ENCODE measurements at regions of chr16 and their contacts with region 1.

Region 1: DNA sequence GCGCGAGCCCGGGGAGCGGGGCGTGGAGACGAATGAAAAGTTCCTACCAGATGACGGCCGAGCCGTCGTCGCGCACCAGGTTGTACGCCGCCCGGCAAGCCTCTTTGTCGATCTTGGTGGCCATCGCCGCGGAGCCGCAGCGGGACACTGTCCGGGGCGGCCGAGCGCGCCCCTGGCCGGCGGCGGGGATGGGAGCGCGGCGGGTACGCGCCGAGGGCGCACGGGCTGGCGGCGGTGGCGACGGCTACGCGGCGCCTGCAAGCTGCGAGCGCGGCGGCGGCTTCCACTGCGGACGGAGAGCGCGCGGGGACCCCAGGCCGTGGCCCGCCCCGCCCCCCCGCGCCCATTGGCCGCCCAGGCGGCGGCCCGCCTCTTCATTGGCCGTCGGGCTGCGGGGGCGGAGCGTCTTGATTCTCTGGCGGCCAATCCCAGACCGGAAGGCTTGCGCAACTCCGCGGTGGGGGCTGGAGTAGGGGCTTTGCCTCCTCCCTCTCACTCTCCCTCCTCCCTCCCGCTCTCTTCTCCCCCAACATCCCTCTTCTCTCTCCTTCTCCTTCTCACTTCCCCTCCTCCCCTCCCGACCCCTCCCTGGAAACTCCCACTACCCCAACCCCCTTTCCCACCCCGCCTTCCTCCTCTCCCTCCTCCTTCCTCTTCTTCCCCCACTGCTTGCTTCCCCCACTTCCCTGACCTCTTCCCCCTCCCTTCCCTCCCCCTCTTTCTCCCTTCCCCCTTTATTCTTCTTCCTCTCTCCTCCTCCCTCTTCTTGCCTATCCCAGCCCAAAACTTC is at the start of gene COTL1:
- DNase-seq: peak; percentile 80 to 97 (median 92)
- ATAC-seq: peak; percentile 83 to 89
- H3K4me3 Mint-ChIP-seq: peak within 1 kb of the TSS; percentile 90 to 97 (median 96)
- H3K27ac Mint-ChIP-seq: peak within 1 kb of the TSS; percentile 82 to 95 (median 92)
- H3K4me1 Mint-ChIP-seq: peaks cover 34 to 63% (median 50%) of the 10 kb centered on the region in 4 donors
- H3K27me3 Mint-ChIP-seq: no peaks in the 10 kb centered on the region
- polyA plus RNA-seq, gene COTL1: 341 to 512 (median 425) TPM

Region 2: DNA sequence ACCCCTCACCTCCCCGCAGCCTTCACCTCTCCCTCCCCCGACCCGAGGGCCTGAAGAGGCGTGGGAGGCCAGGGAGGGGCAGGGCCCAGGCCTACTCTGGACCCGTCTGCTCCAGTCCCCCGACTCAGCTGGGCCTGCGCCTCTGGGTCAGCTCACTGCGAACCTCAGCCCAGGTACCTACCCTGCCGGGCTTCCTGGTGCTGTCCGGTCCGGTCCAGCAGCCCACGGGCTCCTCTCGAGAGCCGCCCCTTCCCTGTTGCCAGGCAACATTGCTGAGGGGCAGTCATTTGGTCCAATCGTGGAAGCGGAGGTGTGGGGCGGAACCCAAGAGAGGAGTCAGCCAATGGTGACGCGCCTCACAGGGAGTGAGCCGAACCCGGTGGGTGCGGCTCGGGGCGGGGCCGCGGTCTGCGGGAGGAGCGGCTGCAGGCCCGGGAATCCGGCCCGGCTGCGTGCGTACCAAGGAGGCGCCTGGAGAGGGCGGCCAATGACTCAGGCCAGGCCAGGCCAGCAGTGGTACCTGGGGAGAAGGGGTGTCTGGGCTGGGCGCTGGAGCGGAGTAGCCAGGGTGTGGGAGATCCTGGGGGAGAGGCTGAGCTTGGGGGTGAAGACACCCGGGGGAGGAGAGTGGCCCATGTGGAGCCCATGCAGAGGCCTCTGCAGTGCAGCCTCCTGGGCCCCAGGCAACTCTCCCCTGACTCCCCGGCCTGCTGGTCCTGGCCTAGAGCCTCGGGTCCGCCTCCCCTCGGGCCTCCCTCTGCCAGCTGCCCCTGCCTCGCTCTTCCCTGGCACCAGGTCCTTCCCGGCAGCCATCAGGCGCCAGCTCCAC is 113.4 kb before region 1 on chr16 and contains the start of gene MEAK7:
- POLR2A ChIA-PET with region 1: interaction called, 10 read pairs
- DNase-seq: peak; percentile 92 to 98 (median 97)
- ATAC-seq: peak; percentile 95 to 97
- H3K4me3 Mint-ChIP-seq: peak within 1 kb of the TSS; percentile 82 to 94 (median 90)
- H3K27ac Mint-ChIP-seq: peak within 1 kb of the TSS; percentile 74 to 93 (median 82)
- H3K4me1 Mint-ChIP-seq: peaks cover 19 to 68% (median 60%) of the 10 kb centered on the region in 4 donors
- H3K27me3 Mint-ChIP-seq: no peaks in the 10 kb centered on the region
- polyA plus RNA-seq, gene MEAK7: 3.7 to 6.7 (median 4.6) TPM

Region 3: GRCh38 chr16:84518748-84519341 is 99.1 kb before region 1 on chr16:
- POLR2A ChIA-PET with region 1: interaction called, 49 read pairs
- DNase-seq: peak in 9 of 10 donors; percentile 40 to 76 (median 65)
- ATAC-seq: peak; percentile 37 to 52
- H3K4me3 Mint-ChIP-seq: peak overlapping the region; percentile 19 to 71 (median 52)
- H3K27ac Mint-ChIP-seq: peak overlapping the region; percentile 77 to 93 (median 86)
- H3K4me1 Mint-ChIP-seq: peaks cover 24 to 66% (median 60%) of the 10 kb centered on the region in 4 donors
- H3K27me3 Mint-ChIP-seq: no peaks in the 10 kb centered on the region

Region 4: GRCh38 chr16:84562174-84562815 is 55.7 kb before region 1 on chr16:
- POLR2A ChIA-PET with region 1: no interaction called
- DNase-seq: no peak
- ATAC-seq: no peak
- H3K4me3 Mint-ChIP-seq: no peak overlapping the region
- H3K27ac Mint-ChIP-seq: peak overlapping the region in 5 of 10 donors; percentile 9 to 55 (median 49)
- H3K4me1 Mint-ChIP-seq: peaks cover 0 to 13% (median 7%) of the 10 kb centered on the region in 4 donors
- H3K27me3 Mint-ChIP-seq: no peaks in the 10 kb centered on the region

Region 5: DNA sequence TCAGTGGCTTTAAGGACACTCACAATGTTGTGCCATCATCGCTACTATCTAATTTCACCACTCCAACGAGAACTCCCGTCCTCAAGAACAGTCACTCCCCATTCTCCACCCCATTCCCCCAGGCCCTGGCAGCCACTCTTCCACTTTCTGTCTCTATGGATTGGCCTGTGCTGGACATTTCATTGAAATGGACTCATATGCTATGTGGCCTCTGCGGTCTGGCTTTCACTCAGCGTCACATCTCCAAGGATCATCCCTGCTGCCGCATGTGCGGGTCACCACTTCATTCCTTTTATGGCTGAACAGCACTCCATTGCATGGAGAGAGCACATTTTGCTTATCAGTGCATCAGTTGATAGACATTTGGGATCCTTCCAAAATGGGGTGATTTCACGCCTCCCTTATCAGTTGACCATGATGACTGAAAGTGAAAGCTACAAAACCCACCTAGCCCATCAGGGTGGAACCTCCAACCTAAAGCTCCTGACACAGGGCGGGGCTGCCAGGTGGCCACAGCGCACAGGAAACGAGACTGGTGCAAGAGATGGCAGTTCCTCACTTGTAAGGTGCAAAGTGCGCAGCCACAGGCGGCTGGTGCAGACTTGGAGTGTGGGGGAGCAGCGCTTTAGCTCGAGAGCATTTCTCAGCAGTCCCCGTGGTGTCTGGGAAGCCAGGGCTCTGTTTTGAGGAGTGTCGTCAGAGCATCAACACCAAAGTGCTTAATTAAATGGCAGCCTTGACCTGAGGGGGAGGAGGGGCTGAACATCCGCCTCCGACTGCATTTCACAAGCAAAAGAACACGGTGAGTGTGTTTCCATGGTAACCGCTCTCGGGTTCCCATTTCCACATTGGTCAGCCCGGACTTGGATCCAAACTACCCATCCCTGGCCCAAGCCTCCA is 23.9 kb before region 1 on chr16:
- POLR2A ChIA-PET with region 1: interaction called, 141 read pairs
- DNase-seq: peak; percentile 51 to 89 (median 76)
- ATAC-seq: peak; percentile 84 to 90
- H3K4me3 Mint-ChIP-seq: peak overlapping the region; percentile 78 to 91 (median 83)
- H3K27ac Mint-ChIP-seq: peak overlapping the region; percentile 93 to 99 (median 97)
- H3K4me1 Mint-ChIP-seq: peaks cover 41 to 77% (median 67%) of the 10 kb centered on the region in 4 donors
- H3K27me3 Mint-ChIP-seq: no peaks in the 10 kb centered on the region

Region 6: GRCh38 chr16:84607694-84608093 is 10.3 kb before region 1 on chr16:
- POLR2A ChIA-PET with region 1: interaction called, 141 read pairs
- DNase-seq: peak in 3 of 10 donors; percentile 27 to 37 (median 33)
- ATAC-seq: peak; percentile 59 to 71
- H3K4me3 Mint-ChIP-seq: peak overlapping the region; percentile 60 to 88 (median 68)
- H3K27ac Mint-ChIP-seq: peak overlapping the region; percentile 51 to 99 (median 92)
- H3K4me1 Mint-ChIP-seq: peaks cover 51 to 96% (median 94%) of the 10 kb centered on the region in 4 donors
- H3K27me3 Mint-ChIP-seq: no peaks in the 10 kb centered on the region

Measured in naive thymus-derived CD8-positive, alpha-beta T cell (primary cell).